H1 (cell line): ENCODE measurements at regions of chr10 and their contacts with region 1.

Region 1: DNA sequence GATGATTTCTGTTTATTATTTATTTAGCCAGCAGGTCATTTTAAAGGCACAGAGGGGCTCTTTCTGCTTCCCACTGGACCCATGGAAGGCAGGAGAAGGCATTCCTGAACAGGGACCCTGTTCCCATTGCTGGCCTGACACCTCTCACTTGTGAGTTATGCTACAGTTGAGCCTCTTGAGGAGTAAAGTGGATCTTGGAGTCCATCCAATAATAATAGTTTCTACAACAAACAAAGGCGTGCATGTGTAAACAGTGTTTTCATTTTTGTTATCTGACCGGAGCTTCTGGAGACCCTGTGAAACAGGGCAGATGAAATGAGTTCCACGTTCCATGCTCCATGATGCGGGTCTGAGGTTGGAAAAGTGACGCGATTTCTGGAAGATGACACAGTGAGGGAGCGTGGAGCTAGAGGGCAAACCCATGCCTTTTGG is 127.3 kb upstream of the HABP2 start:
- DNase-seq: no peak
- H3K4me3 ChIP-seq: no peak overlapping the region
- H3K27ac ChIP-seq: no peak overlapping the region
- H3K4me1 ChIP-seq: no peaks in the 10 kb centered on the region
- H3K27me3 ChIP-seq: no peaks in the 10 kb centered on the region
- CTCF ChIP-seq: no peak
- EP300 ChIP-seq: no peak
- POLR2A ChIP-seq: no peak
- RAD21 ChIP-seq: no peak

Region 2: DNA sequence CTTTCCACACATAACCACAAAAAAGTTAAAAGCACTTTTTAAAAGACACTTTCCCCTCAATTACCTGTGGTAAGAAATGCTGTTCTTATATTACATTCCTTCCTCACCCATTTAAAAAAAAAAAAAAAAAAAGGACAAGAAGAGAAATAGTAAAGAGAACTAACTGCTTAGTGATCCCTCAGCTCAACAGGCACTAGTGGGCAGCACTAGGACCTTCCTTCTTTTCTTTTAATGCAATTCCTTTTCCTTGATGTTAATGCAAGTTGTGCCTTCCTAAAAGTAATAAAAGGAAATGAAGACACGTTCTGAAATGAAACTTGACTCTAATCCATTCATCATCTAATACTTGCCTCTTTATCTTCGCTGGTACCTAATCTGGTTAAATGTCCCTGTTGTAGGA is 285.9 kb before region 1 on chr10:
- CTCF ChIA-PET with region 1: no interaction called
- POLR2A ChIA-PET with region 1: no interaction called
- DNase-seq: no peak
- H3K4me3 ChIP-seq: no peak overlapping the region
- H3K27ac ChIP-seq: no peak overlapping the region
- H3K4me1 ChIP-seq: peaks cover 16 to 39% (median 36%) of the 10 kb centered on the region in 4 experiments
- H3K27me3 ChIP-seq: no peaks in the 10 kb centered on the region
- CTCF ChIP-seq: peak in 1 of 3 experiments; percentile 22; a peak in 2 of 4 replicates
- EP300 ChIP-seq: no peak
- POLR2A ChIP-seq: no peak
- RAD21 ChIP-seq: no peak

Region 3: GRCh38 chr10:113283189-113283588 is 142.4 kb before region 1 on chr10:
- CTCF ChIA-PET with region 1: no interaction called
- POLR2A ChIA-PET with region 1: no interaction called
- DNase-seq: no peak
- H3K4me3 ChIP-seq: no peak overlapping the region
- H3K27ac ChIP-seq: no peak overlapping the region
- H3K4me1 ChIP-seq: no peaks in the 10 kb centered on the region
- H3K27me3 ChIP-seq: no peaks in the 10 kb centered on the region; a peak in 1 of 7 replicates
- CTCF ChIP-seq: peak; percentile 46 to 51 (median 48)
- EP300 ChIP-seq: no peak
- POLR2A ChIP-seq: no peak
- RAD21 ChIP-seq: peak; percentile 37 to 44; a peak in 3 of 4 replicates

Region 4: DNA sequence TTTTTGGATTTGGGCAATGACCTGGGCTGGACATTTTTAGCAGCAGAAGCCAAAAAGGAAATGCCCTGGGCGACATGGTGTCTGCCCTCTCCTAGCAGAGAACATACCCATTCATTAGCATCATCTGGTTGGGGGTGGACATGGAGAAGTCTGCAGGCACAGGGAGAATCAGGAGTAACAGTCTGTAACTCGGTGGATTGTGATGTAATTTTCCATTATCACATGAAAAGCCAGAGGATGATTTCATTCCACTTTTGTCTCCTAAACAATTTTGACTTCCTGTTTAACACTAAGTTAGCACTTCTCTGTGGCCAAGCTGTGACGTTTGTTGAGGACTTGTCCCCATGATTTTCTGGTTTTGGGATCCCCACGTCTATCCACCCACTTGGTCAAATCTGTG is 26.5 kb before region 1 on chr10:
- CTCF ChIA-PET with region 1: no interaction called
- POLR2A ChIA-PET with region 1: no interaction called
- DNase-seq: no peak
- H3K4me3 ChIP-seq: no peak overlapping the region
- H3K27ac ChIP-seq: no peak overlapping the region
- H3K4me1 ChIP-seq: peaks cover 0 to 4% (median 0%) of the 10 kb centered on the region in 4 experiments; a peak in 1 of 7 replicates
- H3K27me3 ChIP-seq: no peaks in the 10 kb centered on the region
- CTCF ChIP-seq: no peak
- EP300 ChIP-seq: no peak
- POLR2A ChIP-seq: no peak
- RAD21 ChIP-seq: no peak

Region 5: GRCh38 chr10:113441220-113441619 is 15.7 kb after region 1 on chr10:
- CTCF ChIA-PET with region 1: interaction called, 24 read pairs
- POLR2A ChIA-PET with region 1: no interaction called
- DNase-seq: no peak
- H3K4me3 ChIP-seq: no peak overlapping the region
- H3K27ac ChIP-seq: no peak overlapping the region
- H3K4me1 ChIP-seq: no peaks in the 10 kb centered on the region; a peak in 1 of 7 replicates
- H3K27me3 ChIP-seq: no peaks in the 10 kb centered on the region
- CTCF ChIP-seq: peak; percentile 26 to 49 (median 37); a peak in 3 of 4 replicates
- EP300 ChIP-seq: no peak
- POLR2A ChIP-seq: no peak
- RAD21 ChIP-seq: peak; percentile 44 to 56; a peak in 3 of 4 replicates